CD8-positive, alpha-beta T cell (primary cell): ENCODE measurements at regions of chr1 and their contacts with region 1.

Region 1: DNA sequence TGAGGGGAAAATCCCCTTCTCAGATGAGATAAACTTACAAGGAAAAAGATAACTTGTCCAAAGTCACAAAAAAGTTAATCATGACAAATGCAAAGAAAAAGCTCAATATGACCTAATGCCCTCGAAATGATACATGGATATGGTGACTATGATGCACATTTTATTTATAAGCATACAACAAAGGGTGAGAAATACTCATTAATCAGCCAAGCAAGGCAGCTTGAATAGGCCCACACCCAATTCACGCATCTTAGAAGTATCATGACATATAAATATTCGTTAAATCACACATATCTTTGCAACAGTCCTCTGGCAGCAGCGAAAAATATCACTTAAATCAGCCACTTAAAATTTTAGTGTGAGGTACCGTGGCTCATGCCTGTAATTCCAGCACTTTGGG is 21.7 kb downstream of the EPS15 start:
- DNase-seq: no peak
- ATAC-seq: no peak
- H3K4me3 ChIP-seq: no peak overlapping the region
- H3K4me3 Mint-ChIP-seq: no peak overlapping the region
- H3K27ac ChIP-seq: no peak overlapping the region
- H3K27ac Mint-ChIP-seq: no peak overlapping the region
- H3K4me1 ChIP-seq: peaks cover 13% of the 10 kb centered on the region
- H3K4me1 Mint-ChIP-seq: peaks cover 63% of the 10 kb centered on the region
- H3K27me3 ChIP-seq: no peaks in the 10 kb centered on the region
- H3K27me3 Mint-ChIP-seq: no peaks in the 10 kb centered on the region
- CTCF ChIP-seq: no peak

Region 2: GRCh38 chr1:51463561-51463960 is 33.8 kb before region 1 on chr1:
- CTCF ChIA-PET with region 1: interaction called, 3 read pairs
- POLR2A ChIA-PET with region 1: no interaction called
- intact Hi-C with region 1: loop called in 1 of 2 experiments (anchors 5 kb)
- DNase-seq: no peak
- ATAC-seq: no peak
- H3K4me3 ChIP-seq: no peak overlapping the region
- H3K4me3 Mint-ChIP-seq: no peak overlapping the region
- H3K27ac ChIP-seq: no peak overlapping the region
- H3K27ac Mint-ChIP-seq: no peak overlapping the region
- H3K4me1 ChIP-seq: no peaks in the 10 kb centered on the region
- H3K4me1 Mint-ChIP-seq: no peaks in the 10 kb centered on the region
- H3K27me3 ChIP-seq: no peaks in the 10 kb centered on the region
- H3K27me3 Mint-ChIP-seq: no peaks in the 10 kb centered on the region
- CTCF ChIP-seq: no peak

Region 3: DNA sequence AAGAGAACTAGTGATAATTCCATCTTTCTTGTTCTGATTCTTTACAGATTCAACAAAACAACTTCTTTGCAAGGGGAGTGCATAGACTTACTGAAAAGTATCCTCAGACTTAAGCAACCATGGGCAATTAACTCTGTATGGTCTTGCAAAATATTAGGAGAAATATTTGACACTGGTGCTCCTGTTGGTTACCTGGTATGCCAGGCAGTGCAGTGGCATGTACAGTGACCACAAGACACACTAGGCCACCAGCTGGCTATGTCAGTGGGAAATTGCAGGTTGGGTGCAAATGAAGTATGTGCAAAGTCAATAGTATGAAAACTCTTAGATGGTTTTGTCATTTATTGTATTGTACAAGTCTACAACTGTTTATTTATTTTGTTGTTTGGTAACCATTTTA is 12.7 kb before region 1 on chr1:
- CTCF ChIA-PET with region 1: no interaction called
- POLR2A ChIA-PET with region 1: no interaction called
- intact Hi-C with region 1: no loop called
- DNase-seq: no peak
- ATAC-seq: no peak
- H3K4me3 ChIP-seq: no peak overlapping the region
- H3K4me3 Mint-ChIP-seq: no peak overlapping the region
- H3K27ac ChIP-seq: no peak overlapping the region
- H3K27ac Mint-ChIP-seq: no peak overlapping the region
- H3K4me1 ChIP-seq: no peaks in the 10 kb centered on the region
- H3K4me1 Mint-ChIP-seq: peaks cover 24% of the 10 kb centered on the region
- H3K27me3 ChIP-seq: no peaks in the 10 kb centered on the region
- H3K27me3 Mint-ChIP-seq: no peaks in the 10 kb centered on the region
- CTCF ChIP-seq: no peak